ENCODE measurements at regions of chr13 and their contacts with region 1.

Region 1: DNA sequence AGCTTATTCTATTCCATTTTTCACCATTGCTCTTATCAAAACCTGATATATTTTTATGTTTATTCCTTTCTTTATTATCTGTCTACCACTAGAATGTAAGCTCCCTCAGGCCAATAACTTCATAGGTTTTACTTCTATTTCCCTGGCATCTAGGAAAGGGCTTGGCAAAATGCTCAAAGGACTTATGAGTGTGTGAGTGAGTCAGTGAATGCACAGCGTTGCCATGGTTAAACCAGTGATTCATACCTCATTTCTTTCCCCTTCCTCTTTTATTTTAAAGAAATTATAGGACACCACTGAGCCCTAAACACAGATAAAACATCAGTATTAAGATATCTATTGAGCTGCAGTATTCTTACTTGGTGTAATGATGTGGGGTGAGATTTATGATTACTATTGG is 162.1 kb downstream of the GPC6 start:
- DNase-seq: no peak

Region 2: GRCh38 chr13:92012787-92013186 is 1375.9 kb before region 1 on chr13:
- intact Hi-C with region 1: loop called in 1 of 2 experiments (anchors 5 kb)
- DNase-seq: no peak